ENCODE measurements at regions of chr11 and their contacts with region 1.

Region 1: GRCh38 chr11:18731949-18732821 is 6.2 kb upstream of the IGSF22 start:
- DNase-seq: peak; percentile 38
- ATAC-seq: peak; percentile 92
- H3K4me3 ChIP-seq: no peak overlapping the region
- H3K27ac ChIP-seq: no peak overlapping the region
- H3K4me1 ChIP-seq: no peaks in the 10 kb centered on the region
- H3K27me3 ChIP-seq: peaks cover 5% of the 10 kb centered on the region
- CTCF ChIP-seq: peak; percentile 84
- POLR2A ChIP-seq: no peak
- RAD21 ChIP-seq: peak; percentile 76

Region 2: DNA sequence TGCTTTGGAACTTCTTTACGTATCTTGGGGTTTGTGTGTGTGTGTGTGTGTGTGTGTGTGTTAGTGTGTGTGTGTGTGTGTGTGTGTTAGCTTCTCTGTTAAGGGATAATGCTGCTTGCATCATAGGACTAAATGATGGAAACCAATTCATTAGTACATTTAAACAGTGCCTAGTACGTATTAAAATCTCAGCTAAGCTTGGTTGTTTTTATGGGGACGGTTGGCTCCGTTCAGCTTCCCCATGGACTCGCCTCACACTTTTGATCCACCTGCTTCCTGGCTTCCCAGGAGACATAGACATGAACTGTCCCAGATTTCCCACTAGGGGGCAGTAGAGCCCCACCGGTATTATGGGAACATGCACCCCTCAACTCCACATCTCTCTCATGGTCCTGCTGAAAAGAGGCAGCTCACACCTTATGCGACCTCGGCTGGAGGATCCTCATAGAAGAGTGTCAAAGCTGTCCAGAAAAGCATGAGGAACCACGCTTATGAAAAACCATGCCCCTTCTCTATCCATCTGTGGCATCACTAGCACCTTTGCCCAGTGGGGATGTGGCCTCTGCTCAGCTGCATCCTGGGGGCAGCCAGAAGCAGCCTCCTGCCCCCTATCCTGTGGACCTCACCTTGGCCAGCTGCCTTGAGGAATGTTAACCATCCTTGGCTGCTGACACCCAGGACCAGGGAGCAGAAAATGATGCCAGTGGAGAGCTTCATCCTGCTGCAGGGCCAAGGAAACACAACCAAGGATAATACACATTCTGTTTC is 616.6 kb before region 1 on chr11:
- CTCF ChIA-PET with region 1: no interaction called
- POLR2A ChIA-PET with region 1: no interaction called
- dilution Hi-C with region 1: no loop called
- in situ Hi-C with region 1: no loop called
- intact Hi-C with region 1: loop called (anchors 1 kb)
- DNase-seq: peak; percentile 55
- ATAC-seq: peak; percentile 97
- H3K4me3 ChIP-seq: no peak overlapping the region
- H3K27ac ChIP-seq: no peak overlapping the region
- H3K4me1 ChIP-seq: no peaks in the 10 kb centered on the region
- H3K27me3 ChIP-seq: peaks cover 11% of the 10 kb centered on the region
- CTCF ChIP-seq: peak; percentile 82
- POLR2A ChIP-seq: no peak
- RAD21 ChIP-seq: peak; percentile 80

Region 3: DNA sequence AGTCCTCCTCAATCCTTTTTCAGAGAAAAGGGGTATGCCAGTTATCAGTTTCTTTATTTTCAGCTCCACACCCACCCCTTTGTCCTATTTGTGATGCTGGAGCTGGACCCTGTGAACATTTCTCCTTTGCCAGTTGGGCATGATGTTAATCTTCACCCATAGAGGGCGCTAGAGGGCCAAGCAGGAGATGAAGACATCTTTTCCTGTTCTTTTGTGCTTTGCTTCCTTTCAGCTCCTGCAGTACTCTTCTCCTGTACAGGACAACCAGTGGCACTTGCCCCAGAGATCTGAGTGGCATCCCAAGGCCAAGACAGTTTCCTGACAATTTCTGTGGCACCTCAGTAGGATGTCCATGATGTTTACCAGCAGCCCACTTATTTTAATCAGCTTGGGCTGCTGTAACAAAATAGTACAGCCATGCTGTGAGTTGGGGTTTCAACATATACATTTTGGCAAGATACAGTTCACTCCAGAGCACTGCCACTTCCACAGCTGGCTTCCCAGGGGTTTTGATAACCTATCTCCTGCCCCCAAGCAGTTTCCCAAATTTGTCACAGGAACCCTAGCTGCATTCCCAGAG is 488.3 kb before region 1 on chr11:
- CTCF ChIA-PET with region 1: no interaction called
- POLR2A ChIA-PET with region 1: no interaction called
- dilution Hi-C with region 1: no loop called
- in situ Hi-C with region 1: no loop called
- intact Hi-C with region 1: loop called (anchors 5 kb)
- DNase-seq: peak; percentile 72
- ATAC-seq: peak; percentile 81
- H3K4me3 ChIP-seq: no peak overlapping the region
- H3K27ac ChIP-seq: no peak overlapping the region
- H3K4me1 ChIP-seq: no peaks in the 10 kb centered on the region
- H3K27me3 ChIP-seq: peaks cover 6% of the 10 kb centered on the region
- CTCF ChIP-seq: peak; percentile 83
- POLR2A ChIP-seq: no peak
- RAD21 ChIP-seq: peak; percentile 80

Region 4: GRCh38 chr11:18526521-18527296 is 205.5 kb before region 1 on chr11 and contains the start of gene TSG101:
- CTCF ChIA-PET with region 1: no interaction called
- POLR2A ChIA-PET with region 1: no interaction called
- dilution Hi-C with region 1: no loop called
- in situ Hi-C with region 1: loop called (anchors 25 kb)
- intact Hi-C with region 1: no loop called
- DNase-seq: peak; percentile 92
- ATAC-seq: peak; percentile 98
- H3K4me3 ChIP-seq: peak within 1 kb of the TSS; percentile 95
- H3K27ac ChIP-seq: peak within 1 kb of the TSS; percentile 92
- H3K4me1 ChIP-seq: peaks cover 2% of the 10 kb centered on the region
- H3K27me3 ChIP-seq: no peaks in the 10 kb centered on the region
- CTCF ChIP-seq: no peak
- POLR2A ChIP-seq: peak; percentile 87
- RAD21 ChIP-seq: no peak; the same call in 1 of the 2 replicates
- total RNA-seq, gene TSG101: 67.4 and 76.4 TPM in 2 replicates

Region 5: GRCh38 chr11:18540207-18541009 is 191.8 kb before region 1 on chr11:
- CTCF ChIA-PET with region 1: no interaction called
- POLR2A ChIA-PET with region 1: no interaction called
- dilution Hi-C with region 1: no loop called
- in situ Hi-C with region 1: loop called (anchors 25 kb)
- intact Hi-C with region 1: loop called (anchors 5 kb)
- DNase-seq: peak; percentile 25
- ATAC-seq: peak; percentile 62; the same call in 1 of the 2 replicates
- H3K4me3 ChIP-seq: no peak overlapping the region
- H3K27ac ChIP-seq: no peak overlapping the region
- H3K4me1 ChIP-seq: no peaks in the 10 kb centered on the region
- H3K27me3 ChIP-seq: no peaks in the 10 kb centered on the region
- CTCF ChIP-seq: peak; percentile 46
- POLR2A ChIP-seq: no peak
- RAD21 ChIP-seq: peak; percentile 46

Region 6: DNA sequence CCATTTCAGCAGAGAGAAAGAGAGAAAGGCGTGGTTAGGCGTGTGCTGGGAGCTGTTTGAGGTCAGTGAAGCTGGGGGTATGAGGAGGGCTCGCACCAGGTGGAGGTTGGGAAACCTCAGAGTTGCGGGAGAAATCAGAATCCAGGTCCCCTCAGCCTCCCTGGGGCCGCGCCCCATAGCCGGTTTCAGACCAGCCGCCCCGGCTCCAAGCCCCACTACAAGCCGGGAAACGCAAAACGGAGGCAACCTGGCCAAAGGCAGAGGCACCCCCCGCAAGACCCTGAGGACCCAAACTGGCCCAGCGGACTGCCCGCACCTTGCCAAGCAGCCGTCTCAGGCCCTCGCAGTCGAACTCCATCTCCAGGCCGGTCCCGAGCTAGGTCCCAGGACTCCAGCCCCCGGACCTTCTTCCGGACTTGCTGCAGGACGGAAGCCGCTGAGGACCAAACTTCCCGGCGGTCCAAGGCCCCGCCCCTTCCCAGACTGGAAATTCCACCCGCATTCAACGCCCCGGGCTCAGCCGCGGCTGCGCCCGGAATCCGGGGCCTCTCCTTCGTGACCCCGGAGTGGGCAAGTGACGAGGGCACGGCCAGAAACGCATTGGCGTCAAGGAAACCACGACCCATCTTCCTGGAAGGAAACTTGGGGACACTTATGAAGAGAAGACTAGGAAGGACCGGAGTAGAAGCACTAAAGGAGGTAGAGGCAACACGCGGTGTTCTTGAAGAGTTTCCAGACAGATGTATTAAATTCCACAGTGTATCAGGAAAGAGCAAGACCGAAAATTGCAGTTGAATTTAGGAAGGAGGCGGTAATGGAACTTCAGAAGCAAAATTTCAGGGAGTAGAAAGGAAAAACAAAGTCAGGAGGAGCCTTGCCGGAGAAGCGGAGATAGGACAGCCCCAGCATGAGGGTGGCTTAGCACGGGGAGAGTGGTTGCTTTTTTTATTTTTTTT is 143.6 kb before region 1 on chr11 and contains the start of gene UEVLD:
- CTCF ChIA-PET with region 1: no interaction called
- POLR2A ChIA-PET with region 1: no interaction called
- dilution Hi-C with region 1: no loop called
- in situ Hi-C with region 1: no loop called
- intact Hi-C with region 1: loop called (anchors 2 kb)
- DNase-seq: peak; percentile 89
- ATAC-seq: peak; percentile 96
- H3K4me3 ChIP-seq: peak within 1 kb of the TSS; percentile 82
- H3K27ac ChIP-seq: peak within 1 kb of the TSS; percentile 85
- H3K4me1 ChIP-seq: peaks cover 5% of the 10 kb centered on the region; the same call in 1 of the 2 replicates
- H3K27me3 ChIP-seq: no peaks in the 10 kb centered on the region
- CTCF ChIP-seq: no peak
- POLR2A ChIP-seq: peak; percentile 71
- RAD21 ChIP-seq: no peak
- total RNA-seq, gene UEVLD: 29.2 and 35.3 TPM in 2 replicates

Region 7: DNA sequence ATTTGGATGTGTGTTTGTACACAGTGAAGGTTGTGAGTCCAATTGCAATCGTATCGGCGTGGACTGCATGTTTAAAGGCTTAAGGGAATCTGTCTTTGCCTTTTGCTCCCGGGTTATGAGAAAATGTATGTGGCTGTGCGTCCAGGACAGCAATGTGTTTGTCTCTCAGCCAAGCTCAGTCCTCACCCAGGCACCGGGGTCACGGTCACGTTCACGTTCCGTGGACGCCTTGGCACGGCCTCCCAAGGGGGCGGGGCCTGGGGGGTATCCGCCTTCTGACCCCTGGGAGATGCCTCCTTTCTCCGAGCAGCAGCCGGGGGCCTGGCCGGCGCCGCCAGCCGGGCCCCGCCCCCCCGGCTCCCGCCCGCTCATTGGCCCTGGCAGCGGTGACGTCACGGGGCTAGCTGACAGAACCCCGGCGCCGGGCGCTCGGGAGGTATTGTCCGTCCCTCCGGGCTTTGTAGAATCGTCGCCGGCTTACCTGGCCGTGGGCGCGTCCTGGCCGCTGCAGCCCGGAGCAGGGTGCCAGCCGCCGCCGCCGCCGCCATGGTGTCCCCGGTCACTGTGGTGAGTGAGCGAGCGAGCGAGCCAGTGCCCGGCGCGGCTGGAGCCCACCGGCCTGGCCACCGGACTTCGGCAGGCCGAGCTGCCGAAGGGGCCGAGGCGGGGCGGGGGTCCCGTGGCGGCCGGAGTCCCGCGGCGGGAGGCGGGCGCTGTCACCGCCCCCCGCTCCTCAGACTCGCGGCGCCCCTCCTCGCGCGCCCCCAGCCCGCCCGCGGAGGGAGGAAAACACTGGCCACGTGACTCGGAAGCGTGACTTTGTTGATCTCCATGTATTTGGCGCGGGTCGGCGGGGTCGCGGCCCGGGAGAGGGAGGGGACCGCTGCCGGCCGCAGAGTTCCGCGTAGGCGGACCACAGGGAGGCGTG is 33.6 kb before region 1 on chr11 and contains the start of gene TMEM86A:
- CTCF ChIA-PET with region 1: no interaction called
- POLR2A ChIA-PET with region 1: no interaction called
- dilution Hi-C with region 1: no loop called
- in situ Hi-C with region 1: no loop called
- intact Hi-C with region 1: no loop called
- DNase-seq: peak; percentile 60
- ATAC-seq: peak; percentile 98
- H3K4me3 ChIP-seq: peak within 1 kb of the TSS; percentile 86
- H3K27ac ChIP-seq: 0 out of 2 replicates have a peak within 1 kb of the TSS, but pooled peaks have one; percentile 25
- H3K4me1 ChIP-seq: peaks cover 3% of the 10 kb centered on the region
- H3K27me3 ChIP-seq: peaks cover 4% of the 10 kb centered on the region; the same call in 1 of the 2 replicates
- CTCF ChIP-seq: no peak
- POLR2A ChIP-seq: no peak
- RAD21 ChIP-seq: no peak
- total RNA-seq, gene TMEM86A: 0.28 and 0.36 TPM in 2 replicates

Region 8: GRCh38 chr11:19290356-19290755 is 558.2 kb after region 1 on chr11:
- CTCF ChIA-PET with region 1: no interaction called
- POLR2A ChIA-PET with region 1: no interaction called
- dilution Hi-C with region 1: no loop called
- in situ Hi-C with region 1: no loop called
- intact Hi-C with region 1: no loop called
- DNase-seq: no peak
- ATAC-seq: no peak; the same call in 1 of the 2 replicates
- H3K4me3 ChIP-seq: no peak overlapping the region
- H3K27ac ChIP-seq: no peak overlapping the region
- H3K4me1 ChIP-seq: no peaks in the 10 kb centered on the region
- H3K27me3 ChIP-seq: peaks cover 14% of the 10 kb centered on the region
- CTCF ChIP-seq: no peak
- POLR2A ChIP-seq: no peak
- RAD21 ChIP-seq: no peak

Measured in IMR-90 (cell line).